Activated T-helper 1 cell treated with anti-CD3 and anti-CD28 coated beads, Interleukin-12 subunit alpha, Interleukin-12 subunit beta, Interleukin-2, Interleukin-4 antibody, amounts not matched to agents 30 ng/mL and 10 ng/mL and 1 ng/mL, durations not matched to agents 14 hours and 24 hours and 36 hours (primary cell): ENCODE measurements at regions of chr11 and their contacts with region 1.

Region 1: GRCh38 chr11:43868852-43869567 is 11.6 kb upstream of the ALKBH3 start:
- DNase-seq: peak; percentile 57
- H3K4me3 Mint-ChIP-seq: peak overlapping the region; percentile 45
- H3K27ac Mint-ChIP-seq: peak overlapping the region; percentile 42
- H3K4me1 Mint-ChIP-seq: peaks cover 27% of the 10 kb centered on the region
- H3K27me3 Mint-ChIP-seq: peaks cover 53% of the 10 kb centered on the region

Region 2: DNA sequence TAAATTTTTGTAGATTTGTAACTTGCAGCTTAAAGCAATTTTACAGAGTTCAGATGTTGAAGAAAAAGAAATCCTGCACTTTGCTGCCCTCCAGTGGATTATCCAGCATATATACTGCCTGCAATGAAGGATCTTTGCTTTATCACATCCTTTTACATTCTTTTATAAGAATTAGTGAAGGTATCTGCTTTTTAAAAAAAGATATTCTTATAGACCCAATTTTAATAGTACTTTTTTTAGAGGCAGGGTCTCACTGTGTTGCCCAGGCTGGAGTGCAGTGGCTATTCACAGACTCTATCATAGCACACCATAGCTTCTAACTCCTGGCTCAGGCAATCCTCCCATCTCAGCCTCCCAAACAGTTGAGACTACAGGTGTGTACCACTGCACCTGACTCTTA is 449.6 kb before region 1 on chr11:
- intact Hi-C with region 1: loop called (anchors 5 kb)
- DNase-seq: peak; percentile 6
- H3K4me3 Mint-ChIP-seq: no peak overlapping the region
- H3K27ac Mint-ChIP-seq: no peak overlapping the region
- H3K4me1 Mint-ChIP-seq: no peaks in the 10 kb centered on the region
- H3K27me3 Mint-ChIP-seq: no peaks in the 10 kb centered on the region

Region 3: DNA sequence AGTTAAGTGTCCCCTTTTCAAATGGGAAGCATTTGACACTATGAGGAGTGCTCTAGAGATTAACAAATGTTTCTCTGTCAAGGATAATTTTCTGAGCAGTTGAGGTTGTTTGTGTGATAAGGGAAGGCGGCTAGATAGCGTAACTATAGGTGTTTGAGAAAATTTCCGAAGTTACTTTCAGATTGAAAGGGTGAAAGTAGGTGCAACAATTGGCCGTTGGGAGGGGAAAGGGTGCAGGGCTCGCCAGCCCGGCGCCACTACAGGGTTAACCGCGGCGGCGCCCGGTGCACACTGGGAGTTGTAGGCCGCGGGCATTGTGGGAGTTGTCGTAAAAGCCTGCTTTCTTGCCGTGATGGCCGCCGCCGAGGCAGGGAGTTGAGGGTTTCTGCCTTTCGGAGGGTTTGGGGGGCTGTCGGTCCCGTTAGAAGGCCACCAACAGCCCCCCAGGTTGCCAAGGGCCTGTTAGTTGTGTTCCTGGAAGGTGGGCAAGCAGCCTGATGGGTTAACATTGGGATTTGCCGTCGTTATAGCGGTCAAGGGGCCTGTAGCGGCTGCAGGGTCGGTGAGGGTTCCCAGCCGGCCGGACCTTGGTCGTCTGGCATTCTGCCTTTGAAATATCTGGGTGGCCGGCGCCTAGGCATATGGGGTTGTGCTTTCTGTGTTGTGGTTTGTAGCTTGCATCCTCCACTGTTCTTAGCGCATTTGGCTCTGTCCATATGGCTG is 225.0 kb before region 1 on chr11:
- intact Hi-C with region 1: loop called (anchors 1 kb)
- DNase-seq: peak; percentile 83
- H3K4me3 Mint-ChIP-seq: peak overlapping the region; percentile 99
- H3K27ac Mint-ChIP-seq: peak overlapping the region; percentile 91
- H3K4me1 Mint-ChIP-seq: peaks cover 19% of the 10 kb centered on the region
- H3K27me3 Mint-ChIP-seq: peaks cover 18% of the 10 kb centered on the region

Region 4: GRCh38 chr11:43845816-43846215 is 23.2 kb before region 1 on chr11:
- intact Hi-C with region 1: no loop called
- DNase-seq: no peak
- H3K4me3 Mint-ChIP-seq: no peak overlapping the region
- H3K27ac Mint-ChIP-seq: no peak overlapping the region
- H3K4me1 Mint-ChIP-seq: no peaks in the 10 kb centered on the region
- H3K27me3 Mint-ChIP-seq: no peaks in the 10 kb centered on the region

Region 5: DNA sequence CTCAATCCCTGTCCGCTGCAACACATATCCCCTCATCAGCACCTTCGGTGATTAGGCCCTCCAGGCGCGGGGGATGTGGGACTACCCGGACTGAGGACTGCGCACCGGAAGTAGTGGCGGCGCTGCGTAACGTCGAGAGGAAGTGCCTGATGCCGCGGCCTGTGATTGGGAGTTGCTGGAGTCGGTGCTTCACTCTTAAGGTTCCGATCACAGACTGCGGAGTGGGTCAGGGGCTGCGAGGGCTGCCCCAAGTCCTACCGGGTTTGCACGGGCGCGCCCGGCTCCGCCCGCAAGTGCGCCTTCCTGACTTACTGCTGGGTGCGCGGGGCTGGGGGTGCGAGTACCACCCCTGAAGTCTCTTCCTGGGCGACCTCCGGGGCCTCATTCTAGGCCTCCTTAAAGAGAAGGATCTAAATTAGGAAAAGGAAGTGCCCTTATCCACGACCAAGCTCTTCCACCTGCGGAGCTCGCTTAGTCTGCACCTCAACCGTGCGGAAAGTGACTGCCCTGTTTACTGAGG is 11.7 kb after region 1 on chr11 and contains the start of gene ALKBH3:
- intact Hi-C with region 1: loop called (anchors 1 kb)
- DNase-seq: peak; percentile 84
- H3K4me3 Mint-ChIP-seq: peak within 1 kb of the TSS; percentile 93
- H3K27ac Mint-ChIP-seq: peak within 1 kb of the TSS; percentile 62
- H3K4me1 Mint-ChIP-seq: peaks cover 20% of the 10 kb centered on the region
- H3K27me3 Mint-ChIP-seq: peaks cover 10% of the 10 kb centered on the region
- total RNA-seq, gene ALKBH3: 32.7 and 38.1 TPM in 2 replicates

Region 6: GRCh38 chr11:43944761-43945311 is 75.8 kb after region 1 on chr11:
- intact Hi-C with region 1: loop called (anchors 1 kb)
- DNase-seq: peak; percentile 56
- H3K4me3 Mint-ChIP-seq: peak overlapping the region; percentile 86
- H3K27ac Mint-ChIP-seq: peak overlapping the region; percentile 40
- H3K4me1 Mint-ChIP-seq: peaks cover 24% of the 10 kb centered on the region
- H3K27me3 Mint-ChIP-seq: peaks cover 62% of the 10 kb centered on the region